ENCODE measurements at regions of chr1 and their contacts with region 1.

Region 1: DNA sequence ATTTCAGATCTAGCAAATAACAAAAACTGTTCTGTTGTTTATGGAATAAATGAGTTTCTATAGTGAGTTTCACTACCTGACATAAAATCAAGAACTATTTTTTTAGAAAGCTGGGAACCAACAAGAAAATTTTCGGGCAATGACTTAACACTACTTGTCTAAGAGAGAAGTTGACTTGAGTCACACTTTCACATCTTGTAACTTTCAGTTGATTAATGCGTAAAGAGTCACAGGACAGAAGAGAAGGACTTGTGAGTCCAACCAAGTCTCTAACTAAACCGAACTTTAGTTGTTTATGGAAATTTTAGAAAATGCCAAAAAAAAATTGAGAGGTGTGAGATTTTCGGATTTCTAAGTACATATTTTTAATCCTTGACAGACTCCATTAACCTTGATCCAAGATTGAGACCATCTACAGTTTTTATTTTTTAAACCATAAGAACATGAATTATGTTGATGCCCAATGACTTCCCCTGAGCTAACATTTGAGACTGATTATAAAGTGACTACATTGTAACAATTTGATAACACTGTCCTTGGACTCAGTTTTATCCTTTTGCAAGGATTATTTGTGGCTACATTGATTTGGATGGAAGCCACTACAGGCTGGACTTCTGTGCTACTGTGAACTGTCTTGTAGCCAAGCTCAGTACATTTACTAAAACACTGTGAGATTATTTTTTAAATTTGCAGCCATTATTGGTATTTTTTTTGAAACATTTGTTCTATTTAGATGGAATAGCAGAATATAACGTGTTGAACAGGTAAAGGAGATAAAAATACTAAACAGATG is 284.0 kb downstream of the PTPRC start:
- DNase-seq: no peak
- H3K4me3 Mint-ChIP-seq: peak overlapping the region; percentile 84
- H3K27ac Mint-ChIP-seq: peak overlapping the region; percentile 93
- H3K4me1 Mint-ChIP-seq: peaks cover 71% of the 10 kb centered on the region
- H3K27me3 Mint-ChIP-seq: no peaks in the 10 kb centered on the region

Region 2: GRCh38 chr1:198167436-198167934 is 755.3 kb before region 1 on chr1:
- intact Hi-C with region 1: loop called (anchors 5 kb)
- DNase-seq: peak; percentile 74
- H3K4me3 Mint-ChIP-seq: peak overlapping the region; percentile 73
- H3K27ac Mint-ChIP-seq: peak overlapping the region; percentile 94
- H3K4me1 Mint-ChIP-seq: peaks cover 65% of the 10 kb centered on the region
- H3K27me3 Mint-ChIP-seq: no peaks in the 10 kb centered on the region

Region 3: GRCh38 chr1:198491028-198491427 is 431.8 kb before region 1 on chr1:
- intact Hi-C with region 1: no loop called
- DNase-seq: no peak
- H3K4me3 Mint-ChIP-seq: no peak overlapping the region
- H3K27ac Mint-ChIP-seq: no peak overlapping the region
- H3K4me1 Mint-ChIP-seq: no peaks in the 10 kb centered on the region
- H3K27me3 Mint-ChIP-seq: peaks cover 1% of the 10 kb centered on the region

Region 4: GRCh38 chr1:198734323-198735008 is 188.4 kb before region 1 on chr1:
- intact Hi-C with region 1: loop called (anchors 5 kb)
- DNase-seq: no peak
- H3K4me3 Mint-ChIP-seq: peak overlapping the region; percentile 41
- H3K27ac Mint-ChIP-seq: peak overlapping the region; percentile 90
- H3K4me1 Mint-ChIP-seq: peaks cover 50% of the 10 kb centered on the region
- H3K27me3 Mint-ChIP-seq: no peaks in the 10 kb centered on the region

Region 5: GRCh38 chr1:198907423-198907746 is 15.4 kb before region 1 on chr1:
- intact Hi-C with region 1: loop called (anchors 1 kb)
- DNase-seq: no peak
- H3K4me3 Mint-ChIP-seq: peak overlapping the region; percentile 72
- H3K27ac Mint-ChIP-seq: peak overlapping the region; percentile 80
- H3K4me1 Mint-ChIP-seq: peaks cover 56% of the 10 kb centered on the region
- H3K27me3 Mint-ChIP-seq: no peaks in the 10 kb centered on the region

Region 6: GRCh38 chr1:198948895-198949659 is 26.2 kb after region 1 on chr1:
- intact Hi-C with region 1: no loop called
- DNase-seq: no peak
- H3K4me3 Mint-ChIP-seq: no peak overlapping the region
- H3K27ac Mint-ChIP-seq: no peak overlapping the region
- H3K4me1 Mint-ChIP-seq: peaks cover 3% of the 10 kb centered on the region
- H3K27me3 Mint-ChIP-seq: no peaks in the 10 kb centered on the region

Region 7: DNA sequence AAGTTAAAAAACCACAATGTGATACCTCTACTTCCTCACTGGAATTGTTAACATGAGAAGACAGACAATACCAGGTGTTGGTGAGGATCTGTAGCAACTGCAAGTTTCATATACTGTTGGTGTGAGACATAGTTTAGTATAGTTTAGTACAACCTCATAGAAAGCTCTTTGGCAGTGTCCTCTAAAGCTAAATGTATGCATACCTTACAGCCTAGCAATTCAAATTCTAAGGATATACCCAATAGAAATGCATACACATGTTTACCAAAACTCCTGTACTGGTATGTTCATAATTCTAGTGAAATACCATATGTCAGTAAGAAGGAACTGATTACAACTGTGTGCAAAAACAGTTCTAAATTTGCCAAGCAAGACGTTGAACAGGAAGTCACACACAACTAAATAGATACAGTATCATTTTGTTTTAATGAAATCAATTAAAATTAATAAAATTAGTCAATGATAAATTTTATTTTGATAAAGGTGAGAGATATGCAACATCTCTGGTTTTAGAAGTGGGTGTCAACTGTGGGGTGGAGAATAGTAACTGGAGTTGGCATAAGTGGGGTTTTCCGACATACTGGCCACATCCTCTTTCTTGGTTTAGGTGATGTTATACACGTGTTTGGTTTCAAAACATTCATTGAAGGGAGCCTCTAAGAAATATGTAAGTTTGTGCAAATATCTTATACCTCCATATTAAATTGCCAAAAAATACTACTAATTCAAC is 166.7 kb after region 1 on chr1:
- intact Hi-C with region 1: loop called (anchors 5 kb)
- DNase-seq: peak; percentile 87
- H3K4me3 Mint-ChIP-seq: peak overlapping the region; percentile 49
- H3K27ac Mint-ChIP-seq: peak overlapping the region; percentile 67
- H3K4me1 Mint-ChIP-seq: peaks cover 36% of the 10 kb centered on the region
- H3K27me3 Mint-ChIP-seq: no peaks in the 10 kb centered on the region

Region 8: DNA sequence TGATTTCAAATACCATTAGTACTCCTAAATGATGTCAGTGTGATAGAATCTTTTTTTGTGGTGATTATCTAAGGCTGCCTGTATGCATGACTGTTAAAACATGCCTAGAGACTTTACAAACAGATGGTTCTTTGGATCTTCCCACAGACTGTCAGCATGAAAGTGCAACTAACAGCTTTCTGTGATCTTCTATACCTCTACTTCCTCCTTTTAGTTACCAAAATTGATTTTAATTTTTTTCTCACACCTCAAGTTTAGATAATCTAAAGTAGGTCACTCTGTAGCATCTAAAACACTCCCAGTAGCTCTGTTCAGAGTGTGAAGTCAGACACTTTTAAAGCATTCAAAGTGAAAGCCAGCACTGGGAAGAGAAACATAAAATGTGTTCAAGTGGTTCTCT is 250.5 kb after region 1 on chr1:
- intact Hi-C with region 1: loop called (anchors 2 kb)
- DNase-seq: peak; percentile 79
- H3K4me3 Mint-ChIP-seq: peak overlapping the region; percentile 16
- H3K27ac Mint-ChIP-seq: peak overlapping the region; percentile 60
- H3K4me1 Mint-ChIP-seq: peaks cover 44% of the 10 kb centered on the region
- H3K27me3 Mint-ChIP-seq: peaks cover 7% of the 10 kb centered on the region

Measured in activated CD4-positive, alpha-beta T cell treated with anti-CD3 and anti-CD28 coated beads, Interleukin-2, amount 10 ng/mL, durations not matched to agents 24 days and 14 days (primary cell).